MCF 10A (cell line): ENCODE measurements at regions of chr4 and their contacts with region 1.

Region 1: GRCh38 chr4:7462509-7462971 is 27.8 kb upstream of the PSAPL1 start:
- DNase-seq: peak; percentile 68
- H3K4me3 Mint-ChIP-seq: no peak overlapping the region
- H3K27ac Mint-ChIP-seq: no peak overlapping the region
- H3K4me1 Mint-ChIP-seq: peaks cover 10% of the 10 kb centered on the region
- H3K27me3 Mint-ChIP-seq: no peaks in the 10 kb centered on the region
- CTCF ChIP-seq: peak; percentile 38

Region 2: DNA sequence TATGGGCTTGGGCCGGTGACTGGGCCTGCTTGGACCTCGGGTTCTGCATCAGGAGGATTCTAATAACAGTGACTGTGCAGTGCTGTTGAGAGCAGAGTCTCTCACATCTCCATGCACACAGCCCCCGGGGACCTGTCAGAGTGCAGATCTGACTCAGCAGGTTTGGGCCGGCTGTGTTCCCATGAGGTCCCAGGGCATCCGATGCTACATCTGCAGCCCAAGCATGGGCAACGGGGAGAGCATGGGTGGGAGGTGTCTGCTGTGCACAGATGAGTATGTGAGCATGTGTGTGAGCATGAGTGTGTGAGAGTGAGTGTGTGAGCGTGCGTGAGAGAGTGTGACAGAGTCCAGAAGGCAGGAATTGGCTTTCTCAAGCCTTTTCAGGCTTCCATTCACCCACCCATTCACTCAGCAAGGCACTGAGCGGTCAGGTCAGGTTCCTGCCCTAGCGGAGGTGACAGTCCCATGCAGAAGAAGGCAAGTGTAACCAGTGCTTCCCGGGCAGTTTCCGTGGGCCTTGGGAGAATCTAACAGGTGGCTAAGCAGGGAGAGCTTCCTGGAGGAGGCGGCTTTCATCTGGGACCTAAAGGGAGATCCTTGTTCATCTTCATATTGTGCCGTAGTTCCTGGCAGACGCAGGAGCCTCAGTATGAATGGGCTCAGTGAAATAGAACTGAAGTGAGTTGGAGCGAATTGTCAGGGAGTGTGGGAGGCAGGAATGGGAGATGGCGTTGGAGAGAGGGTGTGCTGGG is 207.6 kb before region 1 on chr4:
- CTCF ChIA-PET with region 1: no interaction called
- POLR2A ChIA-PET with region 1: no interaction called
- intact Hi-C with region 1: no loop called
- DNase-seq: no peak
- H3K4me3 Mint-ChIP-seq: no peak overlapping the region
- H3K27ac Mint-ChIP-seq: peak overlapping the region; percentile 63
- H3K4me1 Mint-ChIP-seq: peaks cover 10% of the 10 kb centered on the region
- H3K27me3 Mint-ChIP-seq: peaks cover 11% of the 10 kb centered on the region
- CTCF ChIP-seq: no peak

Region 3: GRCh38 chr4:7328898-7329638 is 133.5 kb before region 1 on chr4:
- CTCF ChIA-PET with region 1: interaction called, 8 read pairs
- POLR2A ChIA-PET with region 1: no interaction called
- intact Hi-C with region 1: loop called (anchors 5 kb)
- DNase-seq: peak; percentile 65
- H3K4me3 Mint-ChIP-seq: no peak overlapping the region
- H3K27ac Mint-ChIP-seq: no peak overlapping the region
- H3K4me1 Mint-ChIP-seq: peaks cover 6% of the 10 kb centered on the region
- H3K27me3 Mint-ChIP-seq: no peaks in the 10 kb centered on the region
- CTCF ChIP-seq: no peak

Region 4: GRCh38 chr4:7649741-7650531 is 187.4 kb after region 1 on chr4:
- CTCF ChIA-PET with region 1: no interaction called
- POLR2A ChIA-PET with region 1: no interaction called
- intact Hi-C with region 1: loop called (anchors 2 kb)
- DNase-seq: peak; percentile 71
- H3K4me3 Mint-ChIP-seq: no peak overlapping the region
- H3K27ac Mint-ChIP-seq: no peak overlapping the region
- H3K4me1 Mint-ChIP-seq: peaks cover 39% of the 10 kb centered on the region
- H3K27me3 Mint-ChIP-seq: no peaks in the 10 kb centered on the region
- CTCF ChIP-seq: no peak

Region 5: DNA sequence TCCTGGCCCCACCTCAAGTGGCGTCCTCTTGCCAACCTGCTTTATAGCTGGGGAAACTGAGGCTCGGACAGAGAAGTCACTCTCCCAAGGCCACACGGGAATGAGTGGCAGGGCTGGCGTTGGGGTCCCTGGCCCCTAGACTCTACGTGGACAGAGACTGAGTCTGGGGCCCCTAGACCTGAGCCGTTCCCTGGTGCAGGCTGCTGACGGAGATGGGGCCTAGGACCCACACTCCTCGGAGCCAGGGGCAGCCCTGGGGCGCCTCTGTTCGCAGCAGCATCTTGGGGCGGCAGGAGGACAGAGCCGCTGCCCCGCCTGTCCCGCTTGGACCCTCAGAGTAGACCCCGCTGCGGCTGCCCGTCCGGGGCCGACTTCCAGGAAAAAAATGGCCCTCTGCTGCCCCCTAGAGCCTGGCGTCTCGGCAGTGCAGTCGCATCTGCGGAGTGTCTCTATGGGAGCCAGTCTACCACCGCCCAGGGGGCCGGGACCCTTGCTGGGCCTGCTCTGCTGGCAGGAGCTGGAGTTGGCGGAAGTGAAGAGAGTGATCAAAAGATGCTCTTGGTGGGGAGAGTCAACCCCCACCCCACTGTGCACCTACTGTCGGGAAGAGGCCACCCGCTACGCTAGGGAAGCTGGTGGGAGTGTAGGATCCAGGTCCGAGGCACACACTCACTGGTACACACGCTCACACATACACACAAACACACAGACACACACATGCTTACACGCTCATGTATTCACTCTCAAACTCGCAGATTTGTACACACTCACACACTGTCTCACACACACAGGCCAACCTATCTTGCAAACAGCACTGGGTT is 257.0 kb after region 1 on chr4:
- CTCF ChIA-PET with region 1: interaction called, 6 read pairs
- POLR2A ChIA-PET with region 1: no interaction called
- intact Hi-C with region 1: loop called (anchors 1 kb)
- DNase-seq: peak; percentile 38
- H3K4me3 Mint-ChIP-seq: no peak overlapping the region
- H3K27ac Mint-ChIP-seq: no peak overlapping the region
- H3K4me1 Mint-ChIP-seq: no peaks in the 10 kb centered on the region
- H3K27me3 Mint-ChIP-seq: peaks cover 24% of the 10 kb centered on the region
- CTCF ChIP-seq: peak; percentile 75

Region 6: DNA sequence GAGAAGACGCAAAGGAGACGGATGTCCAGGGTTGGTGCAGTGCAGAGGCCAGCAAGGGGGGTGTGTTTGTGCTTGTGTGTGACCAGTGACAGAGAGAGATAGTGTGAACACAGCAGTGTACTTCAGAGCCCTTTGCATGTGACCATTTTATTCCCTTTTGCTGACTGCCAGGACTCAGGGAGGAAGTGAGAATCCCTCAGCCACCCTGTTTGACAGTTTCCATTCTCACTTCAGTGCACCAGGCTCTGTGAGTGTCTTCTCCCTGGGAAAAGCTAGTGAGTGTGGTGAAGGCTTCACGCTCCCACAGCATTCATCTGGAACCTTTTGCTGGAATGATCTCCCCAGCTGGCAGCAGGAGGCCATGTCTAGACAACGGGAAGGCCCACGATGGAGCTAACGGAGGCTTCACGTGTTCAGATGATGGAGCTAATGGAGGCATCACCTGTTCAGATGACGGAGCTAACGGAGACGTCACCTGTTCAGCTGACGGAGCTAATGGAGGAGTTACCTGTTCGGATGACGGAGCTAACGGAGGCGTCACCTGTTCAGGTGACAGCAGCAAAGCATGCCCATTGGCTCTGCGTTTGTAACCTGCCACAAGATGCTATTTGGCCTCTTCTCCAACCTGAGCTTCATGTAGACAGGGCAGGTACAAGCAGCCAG is 281.7 kb after region 1 on chr4:
- CTCF ChIA-PET with region 1: no interaction called
- POLR2A ChIA-PET with region 1: no interaction called
- intact Hi-C with region 1: no loop called
- DNase-seq: no peak
- H3K4me3 Mint-ChIP-seq: no peak overlapping the region
- H3K27ac Mint-ChIP-seq: peak overlapping the region; percentile 5
- H3K4me1 Mint-ChIP-seq: peaks cover 15% of the 10 kb centered on the region
- H3K27me3 Mint-ChIP-seq: no peaks in the 10 kb centered on the region
- CTCF ChIP-seq: no peak